Motor neuron (in vitro differentiated cells): ENCODE measurements at regions of chr20 and their contacts with region 1.

Region 1: DNA sequence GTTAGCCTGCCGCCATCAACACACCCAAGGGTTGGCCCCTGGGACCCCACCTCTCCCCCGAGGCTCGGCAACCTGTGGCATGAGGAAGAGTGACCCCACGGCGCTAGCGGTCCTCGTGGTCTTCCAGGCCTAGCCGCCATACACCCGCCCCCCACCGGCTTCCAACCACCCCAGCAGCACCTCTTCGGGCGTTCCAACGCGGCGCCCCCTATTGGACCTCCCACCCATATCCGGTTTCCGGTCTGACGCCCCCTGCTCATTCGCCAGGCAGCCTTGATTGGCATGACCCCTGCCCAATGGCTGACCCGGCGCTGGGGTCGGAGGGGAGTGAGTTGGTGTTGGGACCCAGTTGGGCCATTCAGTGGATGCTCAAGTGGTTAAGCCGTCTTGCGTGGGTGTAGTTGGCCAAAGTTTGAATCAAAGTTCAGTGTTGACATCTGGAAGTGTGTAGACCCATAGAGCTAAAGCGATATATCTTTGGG is at the start of gene GNAS-AS1:
- ATAC-seq: peak; percentile 81 to 88 (median 84)
- H3K4me3 ChIP-seq: peak within 1 kb of the TSS; percentile 54 to 91 (median 56)
- H3K27ac ChIP-seq: peak within 1 kb of the TSS; percentile 74 to 83
- H3K4me1 ChIP-seq: peaks cover 4 to 7% of the 10 kb centered on the region in 2 donors
- total RNA-seq, gene GNAS-AS1: 0.50 to 5.0 (median 2.3) TPM

Region 2: GRCh38 chr20:58236612-58237330 is 614.0 kb before region 1 on chr20:
- in situ Hi-C with region 1: loop called in 5 of 9 experiments (anchors 25 kb)
- ATAC-seq: peak; percentile 82 to 97 (median 90)
- H3K4me3 ChIP-seq: peak overlapping the region; percentile 18 to 45 (median 32)
- H3K27ac ChIP-seq: no peak overlapping the region
- H3K4me1 ChIP-seq: peaks cover 10 to 21% of the 10 kb centered on the region in 2 donors

Region 3: GRCh38 chr20:58650776-58651558 is 199.8 kb before region 1 on chr20 and contains the start of gene STX16:
- in situ Hi-C with region 1: loop called in 1 of 9 experiments (anchors 25 kb)
- ATAC-seq: peak; percentile 79 to 85 (median 82)
- H3K4me3 ChIP-seq: peak within 1 kb of the TSS; percentile 57 to 95 (median 84)
- H3K27ac ChIP-seq: peak within 1 kb of the TSS; percentile 69 to 90
- H3K4me1 ChIP-seq: peaks cover 27 to 45% of the 10 kb centered on the region in 2 donors
- total RNA-seq, gene STX16: 17.5 to 86.6 (median 30.4) TPM

Region 4: GRCh38 chr20:58740054-58740936 is 110.4 kb before region 1 on chr20:
- in situ Hi-C with region 1: no loop called
- ATAC-seq: no peak
- H3K4me3 ChIP-seq: no peak overlapping the region
- H3K27ac ChIP-seq: no peak overlapping the region
- H3K4me1 ChIP-seq: peaks cover 16 to 26% of the 10 kb centered on the region in 2 donors

Region 5: GRCh38 chr20:58762120-58762519 is 88.6 kb before region 1 on chr20:
- in situ Hi-C with region 1: no loop called
- ATAC-seq: no peak
- H3K4me3 ChIP-seq: no peak overlapping the region
- H3K27ac ChIP-seq: no peak overlapping the region
- H3K4me1 ChIP-seq: peaks cover 0 to under 1% of the 10 kb centered on the region in 2 donors

Region 6: DNA sequence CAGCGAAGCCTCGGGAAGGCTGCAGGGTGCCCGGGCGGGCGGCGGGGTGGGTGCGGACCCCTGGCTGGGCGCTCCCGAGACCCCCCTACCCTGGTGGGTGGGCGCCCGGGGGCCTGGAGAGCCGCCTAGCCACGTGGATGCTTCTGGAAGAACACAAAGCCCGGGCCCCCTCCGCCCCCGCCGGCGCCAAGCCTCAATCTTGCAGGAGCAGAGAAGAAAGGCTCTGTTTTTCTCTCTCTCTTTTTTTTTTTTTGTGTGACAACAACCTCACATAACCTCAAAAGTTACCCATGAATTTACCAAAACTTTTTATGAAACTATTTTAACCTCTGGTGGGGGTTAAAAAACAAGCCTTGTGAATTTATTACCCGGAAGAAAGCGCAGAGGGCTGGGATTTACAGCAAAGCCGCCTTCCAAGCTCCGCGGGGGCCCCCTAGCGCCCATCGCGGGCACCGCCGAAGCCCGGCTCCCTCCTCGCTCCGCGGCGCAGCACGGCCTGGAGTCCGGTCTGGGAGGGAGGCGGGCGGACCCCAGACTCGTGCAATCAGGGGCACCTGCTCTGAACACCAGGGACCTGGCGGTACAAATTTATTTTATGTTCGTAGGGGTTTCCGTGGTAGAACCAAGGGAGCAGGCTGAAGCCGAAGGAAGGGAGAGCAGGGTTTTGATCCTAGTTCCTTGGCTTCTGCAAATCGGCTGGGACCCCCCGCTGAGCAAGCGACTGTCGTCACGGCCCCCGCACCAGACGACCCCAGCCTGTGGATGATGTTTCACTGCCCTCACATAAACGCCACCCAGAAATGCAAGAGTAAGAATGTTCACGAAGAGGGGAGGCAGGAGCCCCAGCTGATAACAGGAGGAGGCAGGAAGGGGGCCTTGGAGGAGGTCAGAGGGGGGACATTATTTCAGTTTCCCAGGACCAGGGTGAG is 371.8 kb after region 1 on chr20:
- in situ Hi-C with region 1: loop called in 8 of 9 experiments (anchors 25 kb)
- ATAC-seq: peak; percentile 87 to 98 (median 90)
- H3K4me3 ChIP-seq: peak overlapping the region; percentile 28 to 40 (median 30)
- H3K27ac ChIP-seq: no peak overlapping the region
- H3K4me1 ChIP-seq: peaks cover 10 to 38% of the 10 kb centered on the region in 2 donors

Region 7: GRCh38 chr20:59242714-59243113 is 392.0 kb after region 1 on chr20:
- in situ Hi-C with region 1: loop called in 1 of 9 experiments (anchors 25 kb)
- ATAC-seq: no peak
- H3K4me3 ChIP-seq: no peak overlapping the region
- H3K27ac ChIP-seq: no peak overlapping the region
- H3K4me1 ChIP-seq: peaks cover 16 to 17% of the 10 kb centered on the region in 2 donors

Region 8: GRCh38 chr20:59403261-59403961 is 552.7 kb after region 1 on chr20:
- in situ Hi-C with region 1: loop called in 1 of 9 experiments (anchors 25 kb)
- ATAC-seq: peak; percentile 73 to 95 (median 77)
- H3K4me3 ChIP-seq: peak overlapping the region; percentile 6 to 35 (median 15)
- H3K27ac ChIP-seq: no peak overlapping the region
- H3K4me1 ChIP-seq: peaks cover 59 to 64% of the 10 kb centered on the region in 2 donors

Region 9: DNA sequence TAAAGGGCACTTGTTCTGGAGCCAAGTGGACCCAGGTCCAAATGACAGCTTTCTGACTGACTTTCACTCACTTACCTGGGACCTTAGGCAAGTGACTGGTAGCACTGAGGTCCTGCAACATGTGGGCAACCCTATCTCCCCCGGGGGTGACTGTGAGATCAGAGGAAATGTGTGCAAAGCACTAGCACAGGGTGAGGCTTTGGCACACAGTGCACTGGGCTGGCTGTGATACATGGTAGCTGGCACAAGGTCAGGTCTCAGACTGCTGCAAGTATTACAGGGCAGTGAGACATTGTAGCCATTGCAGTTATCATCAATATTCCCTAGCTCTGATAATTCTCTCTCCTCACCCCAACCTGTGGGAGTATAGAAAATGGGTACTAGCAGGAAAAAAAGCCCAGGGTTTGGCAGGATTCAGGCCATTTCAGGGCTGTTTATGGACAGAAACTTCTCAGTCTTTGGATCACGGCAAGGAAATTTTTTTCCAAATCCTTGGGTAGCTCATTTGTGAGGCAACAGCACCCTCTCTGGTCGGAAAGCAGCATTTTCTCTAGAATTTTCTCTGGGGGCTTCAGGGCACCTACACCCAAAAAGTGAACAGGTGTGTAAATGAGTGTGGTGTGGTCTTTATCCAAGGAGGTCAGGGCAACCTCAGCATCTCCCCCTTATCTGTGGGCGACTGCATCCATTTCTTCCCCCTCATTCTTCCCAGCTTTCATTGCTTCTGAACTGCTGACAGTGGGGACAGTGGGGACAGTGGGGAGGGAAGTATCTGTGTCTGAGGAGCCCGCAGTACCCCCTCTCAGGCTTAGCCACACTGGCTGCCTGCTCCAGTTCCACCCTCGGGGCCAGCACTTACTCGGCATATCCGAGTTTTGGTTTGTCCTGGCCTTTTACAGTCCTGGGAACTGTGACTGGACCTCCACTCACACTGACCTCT is 604.9 kb after region 1 on chr20:
- in situ Hi-C with region 1: loop called in 7 of 9 experiments (anchors 25 kb)
- ATAC-seq: peak; percentile 43 to 78 (median 54)
- H3K4me3 ChIP-seq: no peak overlapping the region
- H3K27ac ChIP-seq: no peak overlapping the region
- H3K4me1 ChIP-seq: peaks cover 0 to 9% of the 10 kb centered on the region in 2 donors